Transverse colon (tissue), 4 donors: ENCODE measurements at regions of chr18 and their contacts with region 1.

Region 1: GRCh38 chr18:70288851-70289328 is at the start of gene SOCS6:
- DNase-seq: peak; percentile 63
- H3K4me3 ChIP-seq: peak within 1 kb of the TSS; percentile 66 to 91 (median 84)
- H3K27ac ChIP-seq: peak within 1 kb of the TSS; percentile 92 to 96 (median 93)
- H3K4me1 ChIP-seq: peaks cover 19 to 49% (median 33%) of the 10 kb centered on the region in 4 donors
- H3K27me3 ChIP-seq: no peaks in the 10 kb centered on the region
- CTCF ChIP-seq: no peak
- EP300 ChIP-seq: no peak
- POLR2A ChIP-seq: peak; percentile 63
- total RNA-seq, gene SOCS6: 11.5 to 47.8 (median 46.1) TPM

Region 2: DNA sequence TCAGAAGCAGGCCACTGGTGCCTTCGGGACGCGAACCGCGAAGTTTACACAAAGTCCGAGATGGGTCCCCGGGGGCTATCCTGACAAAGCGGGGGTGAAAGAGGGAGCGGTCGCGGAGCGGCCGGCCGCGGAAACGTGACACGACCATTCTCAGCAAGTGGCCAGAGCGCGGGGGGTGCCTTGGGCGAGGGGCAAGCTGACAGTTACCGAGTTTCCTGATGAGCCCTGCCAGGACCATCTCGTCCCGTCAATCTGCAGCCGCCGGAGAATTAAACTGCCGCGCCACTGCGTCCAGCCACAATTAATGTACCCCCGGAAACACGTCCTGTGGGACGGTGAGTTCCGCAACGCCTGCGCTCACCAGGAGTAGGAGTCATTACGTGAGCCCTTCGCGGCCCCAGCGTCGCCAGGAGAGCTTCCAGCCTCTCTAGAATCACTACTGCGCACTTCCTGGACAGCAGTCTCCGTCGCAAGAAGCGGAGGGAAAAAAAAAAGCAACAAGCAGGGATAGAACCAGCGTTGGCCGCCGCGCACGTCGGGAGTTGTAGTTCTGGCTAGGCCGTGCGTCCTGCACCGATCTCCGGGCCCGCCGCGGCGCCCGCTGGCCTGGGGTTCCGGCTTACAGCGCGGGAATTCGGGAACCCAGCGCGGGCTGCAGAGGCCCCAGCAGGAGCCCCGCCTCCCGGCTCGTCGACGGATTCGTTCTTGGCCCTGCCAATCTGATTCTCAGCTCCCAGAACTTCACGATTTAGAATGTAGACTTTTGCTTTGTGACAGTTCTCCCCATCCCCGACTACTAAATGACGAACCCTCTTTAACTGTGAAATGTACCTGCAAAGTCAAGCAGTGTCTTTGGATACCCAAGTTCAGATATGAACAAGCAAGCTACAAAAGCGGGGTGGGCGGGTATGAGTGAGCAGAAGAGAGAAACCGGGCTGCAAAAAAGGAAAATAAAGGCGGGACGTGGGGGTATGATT is 83.2 kb before region 1 on chr18 and contains the start of gene RTTN:
- in situ Hi-C with region 1: loop called in 1 of 4 experiments (anchors 10 kb)
- intact Hi-C with region 1: loop called (anchors 10 kb)
- DNase-seq: peak; percentile 95
- H3K4me3 ChIP-seq: peak within 1 kb of the TSS; percentile 23 to 87 (median 72)
- H3K27ac ChIP-seq: peak within 1 kb of the TSS; percentile 93 to 97 (median 94)
- H3K4me1 ChIP-seq: peaks cover 9 to 15% (median 10%) of the 10 kb centered on the region in 4 donors
- H3K27me3 ChIP-seq: no peaks in the 10 kb centered on the region
- CTCF ChIP-seq: peak in 1 of 5 experiments; percentile 5
- EP300 ChIP-seq: no peak
- POLR2A ChIP-seq: peak; percentile 32
- total RNA-seq, gene RTTN: 9.7 to 18.7 (median 13.1) TPM

Region 3: DNA sequence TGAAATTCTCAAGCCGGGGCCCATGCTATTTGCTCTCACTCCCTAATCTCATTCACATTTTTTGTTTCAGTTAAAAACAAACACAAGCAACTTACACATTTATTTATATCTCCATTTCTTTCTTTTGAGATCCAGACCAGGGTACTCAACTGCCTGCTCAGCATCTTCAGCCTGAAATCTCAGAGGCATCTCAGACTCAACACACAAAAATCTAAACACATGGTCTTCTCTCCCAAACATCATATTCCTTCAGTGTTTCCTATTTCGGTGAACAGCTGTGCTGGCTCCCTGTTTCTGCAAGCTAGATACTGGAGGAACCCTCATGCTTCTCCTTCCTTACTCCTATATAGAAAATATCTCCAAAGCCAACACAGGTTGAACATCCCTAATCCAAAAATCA is 72.1 kb before region 1 on chr18:
- in situ Hi-C with region 1: loop called in 1 of 4 experiments (anchors 10 kb)
- intact Hi-C with region 1: no loop called
- DNase-seq: no peak
- H3K4me3 ChIP-seq: no peak overlapping the region
- H3K27ac ChIP-seq: no peak overlapping the region
- H3K4me1 ChIP-seq: no peaks in the 10 kb centered on the region
- H3K27me3 ChIP-seq: no peaks in the 10 kb centered on the region
- CTCF ChIP-seq: no peak
- EP300 ChIP-seq: no peak
- POLR2A ChIP-seq: no peak

Region 4: DNA sequence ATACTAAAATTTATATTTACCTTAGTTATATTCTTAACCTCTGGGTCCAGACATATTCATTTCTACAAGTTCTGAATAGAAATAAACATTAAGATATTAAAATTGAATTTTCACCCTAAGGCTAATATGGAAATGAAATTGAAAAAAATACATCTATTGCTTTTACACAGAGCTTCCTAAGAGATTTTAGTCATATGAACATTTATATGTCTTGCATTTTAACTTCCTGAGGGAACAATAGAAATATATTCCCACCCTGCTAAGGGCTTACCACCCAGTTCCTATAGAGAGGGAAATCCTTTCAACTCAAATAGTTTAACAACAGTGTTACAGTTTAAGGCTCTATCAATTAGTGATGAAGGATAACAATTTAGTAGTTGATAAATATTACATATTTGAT is 60.4 kb after region 1 on chr18:
- in situ Hi-C with region 1: no loop called
- intact Hi-C with region 1: no loop called
- DNase-seq: no peak
- H3K4me3 ChIP-seq: no peak overlapping the region
- H3K27ac ChIP-seq: no peak overlapping the region
- H3K4me1 ChIP-seq: no peaks in the 10 kb centered on the region
- H3K27me3 ChIP-seq: no peaks in the 10 kb centered on the region
- CTCF ChIP-seq: no peak
- EP300 ChIP-seq: no peak
- POLR2A ChIP-seq: no peak

Region 5: GRCh38 chr18:70428439-70428838 is 139.5 kb after region 1 on chr18:
- in situ Hi-C with region 1: loop called in 1 of 4 experiments (anchors 25 kb)
- intact Hi-C with region 1: no loop called
- DNase-seq: no peak
- H3K4me3 ChIP-seq: no peak overlapping the region
- H3K27ac ChIP-seq: no peak overlapping the region
- H3K4me1 ChIP-seq: peaks cover 0 to 4% (median 0%) of the 10 kb centered on the region in 4 donors
- H3K27me3 ChIP-seq: no peaks in the 10 kb centered on the region
- CTCF ChIP-seq: no peak
- EP300 ChIP-seq: no peak
- POLR2A ChIP-seq: no peak